ENCODE measurements at regions of chr7 and their contacts with region 1.

Region 1: DNA sequence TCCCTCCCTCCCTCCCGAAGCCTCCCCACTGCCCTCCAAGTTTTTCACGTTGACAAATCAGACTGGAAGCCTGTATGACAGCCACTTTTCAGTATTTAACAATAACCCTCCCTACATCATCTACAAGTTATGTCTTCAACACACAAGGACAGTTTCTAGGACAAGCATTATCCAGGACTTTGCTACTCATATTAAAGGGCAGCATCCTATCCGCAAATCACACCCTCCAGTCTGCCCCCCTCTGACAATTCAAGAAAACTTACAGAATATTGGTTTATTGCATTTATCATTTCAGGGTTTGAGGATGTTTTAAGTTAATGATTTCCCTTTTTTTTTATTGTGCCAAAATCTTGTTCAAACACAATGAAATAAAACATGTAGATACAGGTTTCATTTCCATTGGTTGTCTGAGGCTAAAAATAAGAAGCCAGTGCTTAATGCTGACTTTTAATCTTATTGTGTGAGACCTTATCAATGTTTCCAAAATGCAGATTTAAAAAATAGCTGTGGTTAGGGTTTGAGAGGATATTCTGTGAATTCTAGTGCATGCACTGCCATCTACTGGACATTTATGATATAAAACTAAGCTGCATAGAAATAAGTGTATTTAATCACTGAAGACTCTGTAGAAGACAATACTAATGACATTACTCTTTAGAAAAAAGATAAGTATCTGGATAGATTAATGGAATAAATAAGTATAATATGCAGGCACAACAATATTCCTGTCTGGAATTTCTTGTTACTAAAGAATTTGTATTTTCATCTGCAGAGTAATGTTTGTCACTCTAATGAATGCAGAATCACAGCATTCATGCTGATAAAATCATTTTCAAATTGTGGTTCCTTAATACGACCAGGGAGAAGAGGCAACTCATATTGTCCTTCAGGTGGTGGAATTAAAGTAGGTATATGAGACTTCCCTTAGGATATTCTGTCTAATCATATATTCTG is 64.1 kb downstream of the CAV1 start:
- DNase-seq: no peak

Region 2: GRCh38 chr7:116173051-116174028 is 415.6 kb before region 1 on chr7:
- intact Hi-C with region 1: loop called (anchors 5 kb)
- DNase-seq: no peak

Region 3: GRCh38 chr7:116258734-116259133 is 330.2 kb before region 1 on chr7:
- intact Hi-C with region 1: loop called (anchors 1 kb)
- DNase-seq: peak in 1 of 10 donors; percentile 24

Region 4: DNA sequence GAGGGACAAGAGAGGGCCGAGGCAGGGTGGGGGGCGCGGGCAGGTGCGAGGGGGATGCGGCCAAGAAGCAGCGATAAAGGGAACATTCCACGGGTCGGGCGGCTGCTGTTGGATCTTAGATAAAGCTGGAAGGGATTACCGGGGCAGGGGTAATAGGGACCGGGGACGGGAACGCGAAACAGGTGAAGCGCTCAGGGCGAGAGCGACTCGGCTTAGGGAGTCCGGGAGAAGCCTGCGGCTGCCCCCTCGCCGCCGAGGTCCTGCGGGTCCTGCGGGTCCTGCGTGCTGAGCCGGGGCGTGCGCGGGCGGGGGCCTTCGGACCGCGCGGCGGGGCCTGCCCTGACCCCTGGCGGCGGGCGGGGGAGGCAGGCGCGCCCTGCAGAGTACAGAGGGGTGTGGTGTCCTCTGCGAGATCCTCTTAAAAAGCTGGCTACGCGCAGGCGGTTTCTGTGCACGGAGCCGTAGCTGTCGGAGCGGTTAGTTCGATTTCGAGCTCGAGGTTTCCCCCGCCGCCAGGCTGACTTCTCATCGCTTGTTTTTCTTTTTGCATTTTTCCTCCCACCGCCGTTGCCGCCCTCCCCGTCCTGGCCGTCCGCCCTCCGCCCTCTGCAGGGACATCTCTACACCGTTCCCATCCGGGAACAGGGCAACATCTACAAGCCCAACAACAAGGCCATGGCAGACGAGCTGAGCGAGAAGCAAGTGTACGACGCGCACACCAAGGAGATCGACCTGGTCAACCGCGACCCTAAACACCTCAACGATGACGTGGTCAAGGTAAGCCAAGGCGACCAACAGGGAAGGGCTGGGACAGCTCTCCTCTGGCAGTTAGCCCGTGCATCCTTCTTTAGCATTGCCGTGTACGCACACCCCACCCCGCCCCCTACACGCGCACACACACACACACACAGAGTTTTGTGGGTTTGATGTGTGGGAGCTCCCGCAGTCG is 62.7 kb before region 1 on chr7:
- intact Hi-C with region 1: loop called (anchors 5 kb)
- DNase-seq: peak in 8 of 10 donors; percentile 30 to 89 (median 57)

Region 5: GRCh38 chr7:116876664-116877442 is 287.9 kb after region 1 on chr7:
- intact Hi-C with region 1: no loop called
- DNase-seq: no peak